Transverse colon (tissue), 4 donors: ENCODE measurements at regions of chr4 and their contacts with region 1.

Region 1: DNA sequence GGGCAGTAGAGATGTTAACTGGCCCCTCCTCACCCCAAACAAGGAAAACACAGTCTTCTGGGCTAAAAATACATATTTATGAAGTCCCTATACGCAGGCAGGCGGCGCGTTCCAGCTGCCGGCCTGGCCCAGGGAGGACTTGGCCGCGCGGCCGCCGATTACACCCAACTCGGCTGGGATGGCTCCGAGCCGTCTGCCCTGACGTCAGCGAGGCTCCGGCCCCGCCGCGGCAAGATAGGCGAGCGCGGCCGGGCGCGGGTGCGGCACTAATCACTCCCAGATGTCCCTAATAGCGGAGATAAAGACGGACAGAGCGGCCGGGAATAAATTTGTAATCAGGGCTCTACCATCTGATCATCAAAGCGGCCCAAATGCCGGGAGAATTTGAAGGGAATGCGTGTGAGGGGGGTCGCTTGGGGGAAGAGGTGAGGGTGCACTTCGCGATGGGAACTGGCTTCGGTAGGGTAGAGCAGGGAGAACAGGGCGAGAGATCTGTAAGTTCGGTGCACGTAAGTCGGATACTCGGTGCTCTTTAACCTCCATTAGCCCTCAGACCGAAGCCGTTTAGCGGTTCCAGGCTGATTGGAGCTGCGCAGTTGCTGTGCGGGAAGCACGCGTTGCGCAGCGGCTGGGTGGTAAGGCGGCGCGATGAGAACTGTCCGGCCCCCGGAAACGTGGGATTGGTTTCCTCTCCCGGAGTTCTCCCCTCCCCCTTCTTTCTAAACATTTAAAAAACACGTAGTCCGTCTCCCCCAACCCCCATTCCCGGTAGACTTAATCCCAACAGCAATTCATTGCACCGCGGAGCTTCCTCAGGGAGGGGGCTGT is 7.7 kb downstream of the HAND2 start:
- DNase-seq: peak; percentile 71
- H3K4me3 ChIP-seq: peak overlapping the region; percentile 21 to 59 (median 35)
- H3K27ac ChIP-seq: peak overlapping the region; percentile 81 to 95 (median 89)
- H3K4me1 ChIP-seq: peaks cover 4 to 48% (median 26%) of the 10 kb centered on the region in 4 donors
- H3K27me3 ChIP-seq: peaks cover 100% of the 10 kb centered on the region
- CTCF ChIP-seq: no peak
- EP300 ChIP-seq: no peak
- POLR2A ChIP-seq: no peak

Region 2: GRCh38 chr4:173485164-173485563 is 37.2 kb before region 1 on chr4:
- in situ Hi-C with region 1: no loop called
- intact Hi-C with region 1: loop called (anchors 2 kb)
- DNase-seq: no peak
- H3K4me3 ChIP-seq: no peak overlapping the region
- H3K27ac ChIP-seq: peak overlapping the region in 1 of 4 donors; percentile 39
- H3K4me1 ChIP-seq: peaks cover 0 to 12% (median 0%) of the 10 kb centered on the region in 4 donors
- H3K27me3 ChIP-seq: no peaks in the 10 kb centered on the region
- CTCF ChIP-seq: no peak
- EP300 ChIP-seq: no peak
- POLR2A ChIP-seq: no peak

Region 3: DNA sequence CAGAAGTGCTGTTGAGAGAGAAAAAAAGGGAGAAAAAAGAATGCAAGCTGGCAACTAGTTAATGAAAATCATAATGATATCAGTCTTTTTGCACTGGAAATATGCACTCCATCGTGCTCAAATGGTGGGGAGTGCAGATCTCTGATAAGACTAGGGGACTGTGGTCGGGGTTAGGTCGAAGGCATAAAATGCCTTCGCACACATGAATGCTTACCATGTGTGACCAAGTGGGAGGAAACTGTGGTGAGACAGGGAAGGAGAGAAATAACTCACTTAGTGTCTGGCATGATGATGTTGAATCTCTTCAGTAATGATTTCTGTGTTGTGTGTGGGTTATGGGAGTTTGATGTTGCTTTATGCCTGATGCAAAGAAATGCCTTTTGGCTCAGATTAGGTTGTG is 402.2 kb after region 1 on chr4:
- in situ Hi-C with region 1: no loop called
- intact Hi-C with region 1: no loop called
- DNase-seq: no peak
- H3K4me3 ChIP-seq: no peak overlapping the region
- H3K27ac ChIP-seq: peak overlapping the region in 3 of 4 donors; percentile 31 to 64 (median 58)
- H3K4me1 ChIP-seq: peaks cover 0 to 10% (median 5%) of the 10 kb centered on the region in 4 donors
- H3K27me3 ChIP-seq: no peaks in the 10 kb centered on the region
- CTCF ChIP-seq: no peak
- EP300 ChIP-seq: no peak
- POLR2A ChIP-seq: no peak